ENCODE measurements at regions of chr16 and their contacts with region 1.

Region 1: GRCh38 chr16:73071131-73071940 is 23.4 kb upstream of the ZFHX3 start:
- DNase-seq: peak in 1 of 2 experiments; percentile 37
- H3K4me3 ChIP-seq: no peak overlapping the region
- H3K27ac ChIP-seq: no peak overlapping the region
- H3K4me1 ChIP-seq: peaks cover 38% of the 10 kb centered on the region
- H3K27me3 ChIP-seq: no peaks in the 10 kb centered on the region
- CTCF ChIP-seq: no peak

Region 2: GRCh38 chr16:73058221-73058615 is 13.1 kb before region 1 on chr16:
- CTCF ChIA-PET with region 1: no interaction called
- POLR2A ChIA-PET with region 1: no interaction called
- intact Hi-C with region 1: no loop called
- DNase-seq: peak in 1 of 2 experiments; percentile 64
- H3K4me3 ChIP-seq: peak overlapping the region; percentile 91; the same call in 1 of the 2 replicates
- H3K27ac ChIP-seq: 0 out of 2 replicates have a peak overlapping the region, but pooled peaks have one; percentile 36
- H3K4me1 ChIP-seq: peaks cover 50% of the 10 kb centered on the region
- H3K27me3 ChIP-seq: no peaks in the 10 kb centered on the region
- CTCF ChIP-seq: no peak

Region 3: DNA sequence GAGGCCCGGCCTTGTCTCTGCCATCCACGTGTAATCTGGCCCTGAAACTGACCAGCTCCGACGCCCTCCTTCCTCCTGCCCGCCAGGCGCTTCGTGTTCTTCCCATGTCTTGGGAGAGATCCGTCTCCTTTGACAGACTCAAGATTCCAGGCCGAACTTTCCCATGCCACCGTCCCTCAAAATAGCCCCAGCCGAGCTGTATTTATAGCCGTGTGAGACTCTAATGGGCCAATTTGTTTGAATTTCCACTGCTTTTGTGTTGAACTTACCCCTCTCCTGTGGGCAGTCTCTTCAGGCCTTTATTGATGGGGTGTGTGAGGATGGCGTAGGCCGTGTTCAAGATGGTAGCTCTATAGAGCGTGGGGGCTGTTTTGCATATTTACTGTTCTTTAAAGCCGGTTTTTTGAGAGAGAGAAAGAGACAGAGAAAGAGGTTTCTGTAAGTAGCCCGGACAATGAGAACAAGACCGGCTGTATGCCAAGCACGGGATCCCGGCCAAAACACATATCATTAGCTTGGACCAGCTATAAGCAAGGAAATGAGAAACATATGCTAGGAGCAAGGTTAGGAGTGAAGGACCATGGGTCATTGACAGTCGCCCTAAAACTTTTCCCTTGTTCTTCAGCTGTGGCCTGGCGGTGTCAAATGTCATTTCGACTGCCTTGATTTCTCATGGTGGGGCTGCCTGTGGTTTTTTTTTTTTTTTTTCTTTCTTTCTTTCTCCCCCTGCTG is 101.1 kb after region 1 on chr16:
- CTCF ChIA-PET with region 1: no interaction called
- POLR2A ChIA-PET with region 1: no interaction called
- intact Hi-C with region 1: loop called (anchors 5 kb)
- DNase-seq: peak in 1 of 2 experiments; percentile 23
- H3K4me3 ChIP-seq: no peak overlapping the region
- H3K27ac ChIP-seq: no peak overlapping the region
- H3K4me1 ChIP-seq: peaks cover 6% of the 10 kb centered on the region; the same call in 1 of the 2 replicates
- H3K27me3 ChIP-seq: no peaks in the 10 kb centered on the region
- CTCF ChIP-seq: peak; percentile 54

Region 4: DNA sequence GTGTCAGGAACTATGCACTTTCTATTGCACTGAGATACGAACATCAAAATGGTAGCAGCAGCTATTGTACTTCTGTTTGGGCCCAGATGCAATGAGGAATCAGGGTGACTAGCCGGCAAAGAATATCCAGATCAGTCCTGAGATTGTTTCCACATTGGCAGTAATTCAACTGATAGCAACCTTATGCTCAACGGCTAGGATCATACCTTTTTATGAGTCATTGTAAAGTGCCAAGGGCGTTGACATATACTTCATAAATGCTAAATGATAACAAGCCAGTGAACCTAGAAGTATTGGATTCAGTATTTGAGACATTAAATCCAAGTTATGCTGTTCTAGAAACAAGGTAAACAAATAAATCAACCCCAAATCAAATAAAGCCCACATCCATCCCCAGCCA is 183.6 kb after region 1 on chr16:
- CTCF ChIA-PET with region 1: interaction called, 13 read pairs
- POLR2A ChIA-PET with region 1: no interaction called
- intact Hi-C with region 1: no loop called
- DNase-seq: peak in 1 of 2 experiments; percentile 48
- H3K4me3 ChIP-seq: no peak overlapping the region
- H3K27ac ChIP-seq: no peak overlapping the region
- H3K4me1 ChIP-seq: no peaks in the 10 kb centered on the region
- H3K27me3 ChIP-seq: peaks cover 26% of the 10 kb centered on the region
- CTCF ChIP-seq: no peak

Measured in PC-9 (cell line).